Activated B cell treated with CpG ODN at 0.5 μM for 24 hours (primary cell): ENCODE measurements at regions of chr17 and their contacts with region 1.

Region 1: DNA sequence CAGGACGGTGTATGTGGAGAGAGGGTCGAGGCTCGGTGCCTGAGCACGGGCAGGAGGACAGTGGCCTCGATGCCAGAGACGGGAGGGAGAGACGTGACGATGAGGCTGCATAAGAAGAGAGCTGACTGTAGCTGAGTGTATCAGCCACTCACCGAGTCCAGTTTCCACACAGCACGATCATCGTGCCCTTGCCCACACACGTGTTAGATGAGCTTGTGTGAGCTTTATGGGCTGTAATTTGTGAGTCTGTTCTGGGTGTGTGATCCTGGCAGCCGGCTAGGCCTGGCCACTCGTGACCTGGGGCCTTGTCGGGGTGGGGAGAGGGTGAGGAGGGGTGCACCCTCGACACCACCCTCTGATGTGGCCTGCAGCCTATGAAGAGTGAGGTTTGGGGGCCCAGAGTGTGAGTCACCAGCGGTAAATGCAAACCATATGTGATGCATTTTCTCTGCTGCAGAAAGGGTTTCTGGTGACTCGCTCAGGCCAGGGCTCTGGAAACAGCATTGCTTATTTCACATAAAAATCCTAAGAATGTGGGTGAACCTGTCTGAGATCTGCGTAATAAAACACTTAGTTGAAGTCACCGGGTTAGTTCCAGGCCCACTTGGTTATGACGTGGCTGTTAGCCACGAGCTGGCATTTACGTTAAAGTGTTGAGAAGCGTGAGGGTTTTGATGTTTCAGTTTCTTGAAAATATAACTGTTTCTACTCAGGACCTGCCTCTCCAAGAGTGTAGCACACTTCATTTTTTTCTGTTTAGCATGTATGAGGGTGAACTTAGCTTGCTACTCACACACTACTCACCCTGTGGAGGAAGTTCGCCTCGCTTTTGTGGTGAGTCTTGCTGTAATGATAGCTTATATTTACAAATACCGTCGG is 4.2 kb downstream of the METRNL start:
- DNase-seq: no peak
- ATAC-seq: no peak
- H3K4me3 Mint-ChIP-seq: no peak overlapping the region
- H3K27ac Mint-ChIP-seq: peak overlapping the region; percentile 25
- H3K4me1 Mint-ChIP-seq: peaks cover 32% of the 10 kb centered on the region
- H3K27me3 Mint-ChIP-seq: no peaks in the 10 kb centered on the region
- CTCF ChIP-seq: no peak

Region 2: DNA sequence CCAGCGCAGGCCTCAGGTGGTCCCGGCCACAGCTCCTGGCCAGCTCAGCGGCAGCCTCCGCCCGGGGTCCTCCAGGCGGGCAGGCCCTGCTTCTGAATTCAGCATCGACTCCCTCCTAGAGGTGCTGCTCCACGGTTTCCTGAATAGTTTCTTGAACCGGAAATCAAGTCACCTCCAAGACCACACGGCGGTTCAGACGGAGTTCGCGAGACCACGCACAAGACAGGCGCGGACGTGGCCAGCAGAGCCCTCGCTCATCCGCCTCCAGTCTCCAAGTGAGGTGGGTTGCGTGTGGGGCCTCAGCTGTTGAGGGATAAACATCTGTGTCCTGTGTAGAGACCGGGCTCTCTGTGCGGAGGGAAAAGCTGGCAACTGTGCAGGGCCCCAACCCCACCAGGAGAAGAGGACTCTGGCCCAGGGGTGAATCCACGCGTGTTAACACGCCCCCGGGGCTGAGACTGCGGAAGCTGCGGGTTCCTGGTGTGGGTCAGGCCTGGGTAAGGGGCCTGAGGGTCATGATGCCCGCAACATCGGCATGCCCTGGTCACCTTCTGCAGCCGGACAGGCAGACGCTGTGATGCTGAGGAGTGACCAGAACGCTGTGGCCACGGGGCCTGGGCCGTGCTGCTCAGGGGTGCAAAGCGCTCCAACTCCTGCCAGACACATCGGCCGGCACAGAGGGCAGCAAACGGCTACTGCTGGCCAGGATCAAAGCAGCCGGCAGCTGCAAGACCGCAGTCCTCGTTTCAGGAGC is 59.2 kb before region 1 on chr17:
- CTCF ChIA-PET with region 1: no interaction called
- POLR2A ChIA-PET with region 1: no interaction called
- intact Hi-C with region 1: no loop called
- DNase-seq: no peak
- ATAC-seq: no peak
- H3K4me3 Mint-ChIP-seq: no peak overlapping the region
- H3K27ac Mint-ChIP-seq: no peak overlapping the region
- H3K4me1 Mint-ChIP-seq: no peaks in the 10 kb centered on the region
- H3K27me3 Mint-ChIP-seq: no peaks in the 10 kb centered on the region
- CTCF ChIP-seq: no peak

Region 3: GRCh38 chr17:83099570-83100231 is 16.1 kb after region 1 on chr17:
- CTCF ChIA-PET with region 1: no interaction called
- POLR2A ChIA-PET with region 1: no interaction called
- intact Hi-C with region 1: loop called (anchors 1 kb)
- DNase-seq: no peak
- ATAC-seq: peak; percentile 43
- H3K4me3 Mint-ChIP-seq: peak overlapping the region; percentile 68
- H3K27ac Mint-ChIP-seq: no peak overlapping the region
- H3K4me1 Mint-ChIP-seq: peaks cover 30% of the 10 kb centered on the region
- H3K27me3 Mint-ChIP-seq: peaks cover 5% of the 10 kb centered on the region
- CTCF ChIP-seq: no peak

Region 4: DNA sequence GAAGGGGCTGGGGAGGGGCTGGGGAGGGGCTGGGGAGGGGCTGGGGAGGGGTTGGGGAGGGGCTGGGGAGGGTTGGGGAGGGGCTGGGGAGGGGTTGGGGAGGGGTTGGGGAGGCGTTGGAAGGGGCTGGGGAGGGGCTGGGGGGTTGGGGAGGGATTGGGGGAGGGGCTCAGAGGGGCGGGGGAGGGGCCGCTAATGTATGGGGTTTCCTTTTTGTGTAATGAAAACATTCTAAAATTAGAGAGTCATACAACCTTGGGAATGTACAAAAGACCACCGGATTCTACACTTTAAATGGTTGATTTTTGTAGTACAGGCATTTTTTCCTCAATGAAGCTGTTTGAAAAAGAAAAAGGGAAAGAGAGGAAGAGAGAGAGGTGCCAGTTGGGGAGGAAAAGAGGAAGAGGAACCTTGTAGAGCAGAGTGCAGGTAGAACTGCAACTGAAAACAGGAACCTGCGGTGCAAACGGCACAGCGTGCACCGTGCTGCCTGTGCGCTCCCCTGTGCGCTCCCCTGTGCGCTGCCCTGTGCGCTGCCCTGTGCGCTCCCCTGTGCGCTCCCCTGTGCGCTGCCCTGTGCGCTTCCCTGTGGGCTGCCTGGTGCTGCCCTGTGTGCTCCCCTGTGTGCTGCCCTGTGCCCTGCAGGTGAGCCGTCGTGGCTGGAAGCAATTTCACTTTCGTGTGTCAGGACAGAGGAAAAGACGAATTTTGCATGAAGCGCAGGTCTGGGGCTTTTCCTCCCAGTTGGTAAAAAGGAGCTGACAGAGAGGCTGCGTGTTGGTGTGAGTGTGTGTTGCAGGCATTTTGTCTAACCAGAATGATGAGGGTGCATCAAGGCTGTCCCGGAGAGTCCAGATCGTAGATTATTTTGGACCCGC is 36.7 kb after region 1 on chr17:
- CTCF ChIA-PET with region 1: no interaction called
- POLR2A ChIA-PET with region 1: interaction called, 3 read pairs
- intact Hi-C with region 1: loop called (anchors 1 kb)
- DNase-seq: peak; percentile 55
- ATAC-seq: peak; percentile 100
- H3K4me3 Mint-ChIP-seq: peak overlapping the region; percentile 52
- H3K27ac Mint-ChIP-seq: peak overlapping the region; percentile 59
- H3K4me1 Mint-ChIP-seq: peaks cover 35% of the 10 kb centered on the region
- H3K27me3 Mint-ChIP-seq: peaks cover 18% of the 10 kb centered on the region
- CTCF ChIP-seq: no peak

Region 5: GRCh38 chr17:83133302-83134100 is 49.9 kb after region 1 on chr17:
- CTCF ChIA-PET with region 1: no interaction called
- POLR2A ChIA-PET with region 1: no interaction called
- intact Hi-C with region 1: no loop called
- DNase-seq: peak; percentile 10
- ATAC-seq: no peak
- H3K4me3 Mint-ChIP-seq: no peak overlapping the region
- H3K27ac Mint-ChIP-seq: no peak overlapping the region
- H3K4me1 Mint-ChIP-seq: no peaks in the 10 kb centered on the region
- H3K27me3 Mint-ChIP-seq: peaks cover 4% of the 10 kb centered on the region
- CTCF ChIP-seq: no peak